Testis (tissue), 5 donors: ENCODE measurements at regions of chr5 and their contacts with region 1.

Region 1: DNA sequence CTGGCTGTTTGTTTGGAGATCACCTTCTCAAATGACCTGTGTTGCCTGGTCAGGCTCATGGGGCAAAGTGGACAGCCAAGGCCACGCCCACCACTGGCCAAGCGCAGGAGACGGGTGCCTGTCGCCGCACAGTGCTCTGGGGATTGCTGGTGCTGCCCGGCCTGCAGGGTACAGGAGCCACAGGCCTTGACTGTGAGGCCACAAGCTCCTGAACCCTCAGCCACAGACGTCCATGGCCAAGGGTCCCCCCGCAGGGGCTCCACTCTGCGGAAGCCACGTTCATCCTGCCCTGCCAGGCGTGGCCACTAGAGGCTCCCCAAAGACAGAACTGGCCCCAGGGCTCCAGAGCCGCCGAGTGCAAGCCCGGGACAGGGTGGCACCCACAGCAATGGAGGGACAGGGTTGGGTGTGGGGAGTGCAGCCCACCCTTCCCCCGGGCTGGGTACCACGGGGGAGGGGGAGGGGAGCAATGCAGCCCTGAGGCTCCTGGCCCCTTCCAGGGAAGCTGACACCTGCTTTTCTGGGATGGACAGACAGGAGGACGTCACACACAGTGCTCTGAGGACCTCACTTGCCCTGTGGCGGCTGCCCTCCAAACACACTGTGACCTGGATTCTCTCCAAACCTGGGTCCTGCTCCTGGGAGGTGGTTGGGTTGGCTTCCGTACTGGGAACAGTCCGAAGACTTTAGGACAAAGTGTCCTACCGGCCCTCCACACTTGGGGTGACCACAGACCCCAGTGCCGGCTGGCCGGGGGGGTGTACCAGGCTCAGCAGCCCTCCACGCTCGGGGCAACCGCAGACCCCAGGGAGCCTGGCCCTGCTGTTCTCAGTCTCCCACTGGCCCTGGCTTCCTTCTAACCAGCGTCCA is 21.5 kb downstream of the TPPP start:
- DNase-seq: peak; percentile 72
- H3K4me3 ChIP-seq: no peak overlapping the region
- H3K27ac ChIP-seq: no peak overlapping the region
- H3K4me1 ChIP-seq: peaks cover 32% of the 10 kb centered on the region
- H3K27me3 ChIP-seq: no peaks in the 10 kb centered on the region
- CTCF ChIP-seq: peak; percentile 58 to 83 (median 74)
- POLR2A ChIP-seq: no peak

Region 2: GRCh38 chr5:909086-909485 is 237.4 kb after region 1 on chr5:
- intact Hi-C with region 1: loop called (anchors 5 kb)
- DNase-seq: peak; percentile 10
- H3K4me3 ChIP-seq: no peak overlapping the region
- H3K27ac ChIP-seq: no peak overlapping the region
- H3K4me1 ChIP-seq: no peaks in the 10 kb centered on the region
- H3K27me3 ChIP-seq: no peaks in the 10 kb centered on the region
- CTCF ChIP-seq: no peak
- POLR2A ChIP-seq: no peak